WTC11 (cell line): ENCODE measurements at regions of chr19 and their contacts with region 1.

Region 1: GRCh38 chr19:17419621-17420466 is at the start of gene MVB12A:
- DNase-seq: peak; percentile 97
- ATAC-seq: peak; percentile 87
- H3K4me3 Mint-ChIP-seq: peak within 1 kb of the TSS; percentile 83
- H3K27ac Mint-ChIP-seq: peak within 1 kb of the TSS; percentile 99
- H3K4me1 Mint-ChIP-seq: peaks cover 41% of the 10 kb centered on the region
- H3K27me3 Mint-ChIP-seq: peaks cover 23% of the 10 kb centered on the region
- CTCF ChIP-seq: no peak
- total RNA-seq, gene MVB12A: 58.7 to 78.6 TPM (median 70.8 TPM) in 3 replicates

Region 2: GRCh38 chr19:17107525-17108452 is 312.1 kb before region 1 on chr19:
- CTCF ChIA-PET with region 1: no interaction called
- POLR2A ChIA-PET with region 1: no interaction called
- DNase-seq: no peak
- ATAC-seq: no peak
- H3K4me3 Mint-ChIP-seq: no peak overlapping the region
- H3K27ac Mint-ChIP-seq: peak overlapping the region; percentile 53; the same call in 1 of the 2 replicates
- H3K4me1 Mint-ChIP-seq: peaks cover 8% of the 10 kb centered on the region
- H3K27me3 Mint-ChIP-seq: no peaks in the 10 kb centered on the region
- CTCF ChIP-seq: no peak

Region 3: GRCh38 chr19:17405250-17406038 is 14.4 kb before region 1 on chr19 and contains the start of gene BST2:
- CTCF ChIA-PET with region 1: interaction called, 23 read pairs
- POLR2A ChIA-PET with region 1: interaction called, 27 read pairs
- DNase-seq: no peak
- ATAC-seq: peak; percentile 44
- H3K4me3 Mint-ChIP-seq: peak within 1 kb of the TSS; percentile 74
- H3K27ac Mint-ChIP-seq: peak within 1 kb of the TSS; percentile 87
- H3K4me1 Mint-ChIP-seq: peaks cover 32% of the 10 kb centered on the region
- H3K27me3 Mint-ChIP-seq: no peaks in the 10 kb centered on the region
- CTCF ChIP-seq: no peak
- total RNA-seq, gene BST2: 22.8 to 67.7 TPM (median 61.1 TPM) in 3 replicates

Region 4: GRCh38 chr19:17448131-17448967 is 28.5 kb after region 1 on chr19 and contains the start of gene TMEM221:
- CTCF ChIA-PET with region 1: interaction called, 14 read pairs
- POLR2A ChIA-PET with region 1: no interaction called
- DNase-seq: peak; percentile 78
- ATAC-seq: peak; percentile 75
- H3K4me3 Mint-ChIP-seq: peak within 1 kb of the TSS; percentile 70
- H3K27ac Mint-ChIP-seq: no peak within 1 kb of the TSS
- H3K4me1 Mint-ChIP-seq: peaks cover 3% of the 10 kb centered on the region
- H3K27me3 Mint-ChIP-seq: peaks cover 22% of the 10 kb centered on the region
- CTCF ChIP-seq: peak; percentile 40; the same call in 1 of the 2 replicates
- total RNA-seq, gene TMEM221: 1.2 to 2.9 TPM (median 2.3 TPM) in 3 replicates

Region 5: GRCh38 chr19:17504030-17504429 is 84.2 kb after region 1 on chr19:
- CTCF ChIA-PET with region 1: no interaction called
- POLR2A ChIA-PET with region 1: no interaction called
- DNase-seq: no peak
- ATAC-seq: no peak
- H3K4me3 Mint-ChIP-seq: no peak overlapping the region
- H3K27ac Mint-ChIP-seq: peak overlapping the region; percentile 79
- H3K4me1 Mint-ChIP-seq: peaks cover 7% of the 10 kb centered on the region
- H3K27me3 Mint-ChIP-seq: no peaks in the 10 kb centered on the region
- CTCF ChIP-seq: no peak